Mammary epithelial cell (primary cell): ENCODE measurements at regions of chr17 and their contacts with region 1.

Region 1: DNA sequence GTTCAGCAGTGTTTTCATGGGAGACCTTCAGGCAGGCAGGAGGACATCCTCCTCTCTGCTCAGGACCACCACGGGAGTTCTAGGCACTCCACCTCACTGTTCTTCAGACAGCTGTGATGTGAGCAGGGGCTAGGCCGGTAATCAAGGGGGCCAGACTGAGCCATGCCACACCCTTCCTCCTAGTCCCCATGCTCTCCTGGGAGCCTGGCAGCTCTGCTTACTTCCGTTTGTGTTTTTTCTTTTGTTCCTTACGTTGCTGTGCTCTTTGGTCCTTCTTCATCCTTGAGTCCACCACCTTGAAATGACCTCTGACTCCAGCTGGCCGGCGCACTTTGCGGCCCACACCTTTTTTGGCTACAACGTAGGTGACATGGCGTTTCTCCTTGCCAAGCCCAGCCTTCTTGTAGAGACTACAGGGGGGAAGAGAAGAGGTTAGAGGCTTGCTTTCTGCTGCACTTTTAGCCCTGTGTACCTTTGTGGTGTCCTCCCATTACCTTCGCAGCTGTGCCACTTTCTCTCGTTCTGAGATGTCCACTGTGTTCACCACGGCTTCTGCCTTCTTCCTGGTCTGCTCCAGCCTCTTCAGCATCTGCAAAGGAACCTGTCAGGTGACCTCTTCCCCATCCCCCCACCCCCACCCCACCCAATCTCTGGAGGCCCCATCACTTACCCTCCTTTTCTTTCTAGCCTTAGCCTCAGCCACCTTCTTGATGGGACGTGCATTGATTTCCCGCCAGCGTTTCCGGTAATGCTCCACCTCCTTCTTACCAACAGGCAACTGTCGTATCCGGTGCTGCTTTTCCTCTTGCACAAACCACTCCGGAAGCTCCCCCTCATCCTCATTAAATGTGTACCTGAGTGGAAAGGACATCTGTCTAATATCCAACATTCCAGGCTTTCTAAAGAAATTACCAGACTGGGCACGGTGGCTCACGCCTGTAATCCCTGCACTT is 7.4 kb upstream of the PSMC5 start:
- DNase-seq: no peak
- H3K4me3 ChIP-seq: no peak overlapping the region
- H3K27ac ChIP-seq: no peak overlapping the region
- H3K4me1 ChIP-seq: no peaks in the 10 kb centered on the region
- H3K27me3 ChIP-seq: no peaks in the 10 kb centered on the region
- CTCF ChIP-seq: no peak

Region 2: GRCh38 chr17:63222655-63223054 is 597.2 kb before region 1 on chr17:
- CTCF ChIA-PET with region 1: no interaction called
- dilution Hi-C with region 1: no loop called
- in situ Hi-C with region 1: no loop called
- intact Hi-C with region 1: no loop called
- DNase-seq: peak; percentile 5
- H3K4me3 ChIP-seq: no peak overlapping the region
- H3K27ac ChIP-seq: no peak overlapping the region
- H3K4me1 ChIP-seq: no peaks in the 10 kb centered on the region
- H3K27me3 ChIP-seq: no peaks in the 10 kb centered on the region
- CTCF ChIP-seq: no peak

Region 3: GRCh38 chr17:63549946-63550807 is 269.7 kb before region 1 on chr17 and contains the start of gene DCAF7:
- CTCF ChIA-PET with region 1: no interaction called
- dilution Hi-C with region 1: no loop called
- in situ Hi-C with region 1: no loop called
- intact Hi-C with region 1: no loop called
- DNase-seq: peak; percentile 100
- H3K4me3 ChIP-seq: peak within 1 kb of the TSS; percentile 86 to 98 (median 95)
- H3K27ac ChIP-seq: peak within 1 kb of the TSS; percentile 70
- H3K4me1 ChIP-seq: peaks cover 27% of the 10 kb centered on the region
- H3K27me3 ChIP-seq: no peaks in the 10 kb centered on the region
- CTCF ChIP-seq: no peak
- total RNA-seq, gene DCAF7: 47.5 to 71.3 TPM

Region 4: GRCh38 chr17:63697341-63698286 is 122.2 kb before region 1 on chr17:
- CTCF ChIA-PET with region 1: no interaction called
- dilution Hi-C with region 1: no loop called
- in situ Hi-C with region 1: no loop called
- intact Hi-C with region 1: no loop called
- DNase-seq: peak; percentile 29
- H3K4me3 ChIP-seq: no peak overlapping the region
- H3K27ac ChIP-seq: no peak overlapping the region
- H3K4me1 ChIP-seq: no peaks in the 10 kb centered on the region
- H3K27me3 ChIP-seq: no peaks in the 10 kb centered on the region
- CTCF ChIP-seq: peak; percentile 51 to 68

Region 5: GRCh38 chr17:63747420-63747819 is 72.4 kb before region 1 on chr17:
- CTCF ChIA-PET with region 1: no interaction called
- dilution Hi-C with region 1: loop called (anchors 5 kb)
- in situ Hi-C with region 1: no loop called
- intact Hi-C with region 1: no loop called
- DNase-seq: no peak
- H3K4me3 ChIP-seq: no peak overlapping the region
- H3K27ac ChIP-seq: no peak overlapping the region
- H3K4me1 ChIP-seq: no peaks in the 10 kb centered on the region
- H3K27me3 ChIP-seq: no peaks in the 10 kb centered on the region
- CTCF ChIP-seq: no peak

Region 6: GRCh38 chr17:63774969-63775265 is 44.9 kb before region 1 on chr17:
- CTCF ChIA-PET with region 1: no interaction called
- dilution Hi-C with region 1: no loop called
- in situ Hi-C with region 1: no loop called
- intact Hi-C with region 1: no loop called
- DNase-seq: peak; percentile 30
- H3K4me3 ChIP-seq: peak overlapping the region; percentile 88 to 95 (median 94)
- H3K27ac ChIP-seq: peak overlapping the region; percentile 88
- H3K4me1 ChIP-seq: peaks cover 6% of the 10 kb centered on the region
- H3K27me3 ChIP-seq: no peaks in the 10 kb centered on the region
- CTCF ChIP-seq: no peak